Left lung (tissue), 14 donors: ENCODE measurements at regions of chr1 and their contacts with region 1.

Region 1: GRCh38 chr1:158117854-158118704 is 62.6 kb upstream of the CD1D start:
- DNase-seq: peak in 3 of 4 donors; percentile 46 to 84 (median 59)
- ATAC-seq: peak; percentile 77
- H3K4me3 ChIP-seq: no peak overlapping the region
- H3K27ac ChIP-seq: no peak overlapping the region
- H3K4me1 ChIP-seq: peaks cover 7 to 15% of the 10 kb centered on the region in 2 donors
- H3K27me3 ChIP-seq: peaks cover 5 to 81% of the 10 kb centered on the region in 2 donors
- CTCF ChIP-seq: peak in 1 of 2 donors; percentile 22

Region 2: GRCh38 chr1:157626099-157626498 is 492.0 kb before region 1 on chr1:
- intact Hi-C with region 1: no loop called
- DNase-seq: peak in 1 of 4 donors; percentile 1
- ATAC-seq: peak; percentile 48
- H3K4me3 ChIP-seq: no peak overlapping the region
- H3K27ac ChIP-seq: no peak overlapping the region
- H3K4me1 ChIP-seq: no peaks in the 10 kb centered on the region
- H3K27me3 ChIP-seq: peaks cover 0 to 30% of the 10 kb centered on the region in 2 donors
- CTCF ChIP-seq: no peak

Region 3: DNA sequence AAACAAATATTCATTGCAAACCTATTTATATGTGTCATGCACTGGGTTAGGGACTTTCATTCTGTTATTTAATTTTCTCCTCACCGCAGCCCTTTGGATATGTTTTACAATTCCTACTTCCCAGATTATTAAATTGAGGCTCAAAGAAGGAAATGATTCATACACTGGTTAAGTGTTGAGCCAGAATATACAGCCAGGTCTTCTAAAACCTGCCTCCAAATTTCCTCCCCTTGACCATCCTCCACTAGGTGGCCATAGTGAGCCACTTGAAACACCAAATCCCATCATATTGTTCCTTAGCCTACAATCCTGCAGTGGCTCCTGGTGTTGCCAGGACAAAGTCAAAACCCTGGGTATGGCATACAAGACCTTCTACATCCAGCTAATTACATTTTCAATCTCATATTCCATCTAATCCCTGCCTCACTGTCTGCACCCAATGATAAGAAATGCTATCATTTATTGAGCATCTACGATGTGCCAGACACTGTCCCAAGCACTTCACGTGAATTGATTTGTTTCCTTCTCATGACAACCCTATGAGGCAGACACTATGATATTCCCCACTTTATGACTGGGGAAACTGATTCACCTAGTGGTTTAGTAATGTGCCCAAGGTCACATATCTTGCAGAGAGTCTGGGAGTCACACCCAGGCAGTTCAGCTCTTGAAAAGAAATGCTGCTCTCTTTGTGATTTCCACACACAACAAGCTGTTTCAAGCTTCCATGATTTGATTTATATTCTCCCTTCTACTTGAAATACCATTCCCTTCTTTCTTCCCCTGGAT is 148.2 kb before region 1 on chr1:
- intact Hi-C with region 1: loop called in 1 of 2 experiments (anchors 5 kb)
- DNase-seq: peak in 1 of 4 donors; percentile 57
- ATAC-seq: peak; percentile 90
- H3K4me3 ChIP-seq: no peak overlapping the region
- H3K27ac ChIP-seq: no peak overlapping the region
- H3K4me1 ChIP-seq: peaks cover 0 to 11% of the 10 kb centered on the region in 2 donors
- H3K27me3 ChIP-seq: no peaks in the 10 kb centered on the region
- CTCF ChIP-seq: peak; percentile 67 to 70

Region 4: GRCh38 chr1:157984469-157984868 is 133.6 kb before region 1 on chr1:
- intact Hi-C with region 1: loop called in 1 of 2 experiments (anchors 10 kb)
- DNase-seq: no peak
- ATAC-seq: no peak
- H3K4me3 ChIP-seq: no peak overlapping the region
- H3K27ac ChIP-seq: no peak overlapping the region
- H3K4me1 ChIP-seq: no peaks in the 10 kb centered on the region
- H3K27me3 ChIP-seq: no peaks in the 10 kb centered on the region
- CTCF ChIP-seq: no peak

Region 5: DNA sequence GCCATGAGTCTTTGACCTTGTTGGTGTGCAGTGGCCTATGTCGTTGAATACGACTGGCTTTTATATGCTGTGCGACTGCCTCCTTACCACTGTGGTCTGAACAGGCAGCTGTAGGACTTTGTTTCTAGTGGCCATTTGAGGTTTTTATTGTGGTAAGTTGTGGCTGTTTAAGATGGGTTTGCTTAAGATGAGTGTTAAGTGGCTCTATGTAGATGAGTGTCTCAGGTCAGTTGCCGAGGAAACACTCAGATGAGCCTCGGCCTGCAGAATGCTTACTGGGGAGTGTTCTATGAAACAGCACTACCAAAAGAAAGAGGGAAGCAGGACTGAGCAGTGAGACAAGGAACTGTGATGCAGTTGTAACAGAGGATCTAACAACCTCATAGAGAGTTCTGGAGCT is 156.7 kb after region 1 on chr1:
- intact Hi-C with region 1: no loop called
- DNase-seq: no peak
- ATAC-seq: no peak
- H3K4me3 ChIP-seq: no peak overlapping the region
- H3K27ac ChIP-seq: no peak overlapping the region
- H3K4me1 ChIP-seq: no peaks in the 10 kb centered on the region
- H3K27me3 ChIP-seq: no peaks in the 10 kb centered on the region
- CTCF ChIP-seq: no peak